Transverse colon (tissue), 4 donors: ENCODE measurements at regions of chr7 and their contacts with region 1.

Region 1: DNA sequence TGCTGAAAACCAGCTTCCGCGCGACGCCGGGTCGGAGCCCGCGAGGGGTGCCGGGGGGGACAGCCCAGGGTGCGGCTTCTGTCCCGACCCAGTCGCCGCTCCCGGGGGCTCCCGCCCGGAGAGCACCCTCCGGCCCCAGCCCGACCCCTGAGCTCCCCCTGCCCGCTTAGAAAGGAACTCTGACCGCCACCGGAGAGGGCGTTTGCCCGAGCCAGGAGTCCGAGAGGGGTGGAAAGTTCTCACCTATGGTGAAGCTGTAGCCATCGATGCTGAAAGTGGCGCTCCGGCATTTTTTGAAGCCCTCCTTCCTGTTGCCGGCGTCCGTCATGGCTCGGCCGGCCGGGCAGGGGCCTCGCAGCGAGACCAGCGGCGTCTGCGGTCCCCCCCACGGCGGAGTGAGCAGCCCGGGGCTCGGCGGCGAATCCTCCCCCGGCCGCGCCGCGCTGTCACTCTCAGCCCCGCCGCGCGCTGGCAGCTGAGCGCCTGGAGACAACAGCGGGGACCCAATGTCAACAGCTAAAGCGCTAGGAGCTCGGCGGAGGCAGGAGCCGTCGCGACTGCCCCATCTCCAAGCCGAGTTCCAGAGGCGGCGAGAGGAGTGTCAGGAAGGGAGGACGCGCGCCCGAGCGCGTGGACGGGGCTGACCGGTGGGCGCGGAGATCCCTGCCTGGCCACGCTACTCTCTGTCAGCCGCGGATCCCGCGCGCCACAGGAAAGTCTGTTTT is 191.6 kb downstream of the LSM5 start:
- DNase-seq: no peak
- H3K4me3 ChIP-seq: peak overlapping the region in 3 of 4 donors; percentile 25 to 45 (median 30)
- H3K27ac ChIP-seq: peak overlapping the region in 1 of 4 donors; percentile 17
- H3K4me1 ChIP-seq: peaks cover 0 to 10% (median 6%) of the 10 kb centered on the region in 4 donors
- H3K27me3 ChIP-seq: peaks cover 55% of the 10 kb centered on the region
- CTCF ChIP-seq: no peak
- EP300 ChIP-seq: no peak
- POLR2A ChIP-seq: no peak

Region 2: GRCh38 chr7:31705377-31705776 is 593.2 kb before region 1 on chr7:
- in situ Hi-C with region 1: no loop called
- intact Hi-C with region 1: no loop called
- DNase-seq: no peak
- H3K4me3 ChIP-seq: no peak overlapping the region
- H3K27ac ChIP-seq: no peak overlapping the region
- H3K4me1 ChIP-seq: no peaks in the 10 kb centered on the region
- H3K27me3 ChIP-seq: no peaks in the 10 kb centered on the region
- CTCF ChIP-seq: no peak
- EP300 ChIP-seq: no peak
- POLR2A ChIP-seq: no peak

Region 3: DNA sequence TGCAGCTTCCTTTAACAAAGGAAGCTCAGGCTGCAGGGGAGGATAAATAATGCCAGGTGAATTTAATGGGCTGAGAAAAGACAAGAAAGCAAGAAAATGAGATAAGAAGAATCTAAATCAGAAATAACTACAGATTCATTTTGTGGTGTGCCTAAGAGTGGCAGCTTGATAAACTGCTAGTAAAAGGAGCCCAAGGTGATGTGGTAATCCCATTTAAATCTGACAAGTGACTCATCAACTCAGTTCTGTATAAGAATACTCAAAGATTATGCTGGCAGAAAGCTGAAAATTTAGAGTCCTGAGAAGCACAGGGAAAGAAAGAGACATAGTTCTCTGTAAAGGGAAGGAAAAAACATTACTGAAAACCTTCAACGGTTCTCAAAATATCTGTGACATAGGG is 119.0 kb before region 1 on chr7:
- in situ Hi-C with region 1: loop called in 1 of 4 experiments (anchors 25 kb)
- intact Hi-C with region 1: no loop called
- DNase-seq: no peak
- H3K4me3 ChIP-seq: no peak overlapping the region
- H3K27ac ChIP-seq: no peak overlapping the region
- H3K4me1 ChIP-seq: no peaks in the 10 kb centered on the region
- H3K27me3 ChIP-seq: no peaks in the 10 kb centered on the region
- CTCF ChIP-seq: no peak
- EP300 ChIP-seq: no peak
- POLR2A ChIP-seq: no peak

Region 4: DNA sequence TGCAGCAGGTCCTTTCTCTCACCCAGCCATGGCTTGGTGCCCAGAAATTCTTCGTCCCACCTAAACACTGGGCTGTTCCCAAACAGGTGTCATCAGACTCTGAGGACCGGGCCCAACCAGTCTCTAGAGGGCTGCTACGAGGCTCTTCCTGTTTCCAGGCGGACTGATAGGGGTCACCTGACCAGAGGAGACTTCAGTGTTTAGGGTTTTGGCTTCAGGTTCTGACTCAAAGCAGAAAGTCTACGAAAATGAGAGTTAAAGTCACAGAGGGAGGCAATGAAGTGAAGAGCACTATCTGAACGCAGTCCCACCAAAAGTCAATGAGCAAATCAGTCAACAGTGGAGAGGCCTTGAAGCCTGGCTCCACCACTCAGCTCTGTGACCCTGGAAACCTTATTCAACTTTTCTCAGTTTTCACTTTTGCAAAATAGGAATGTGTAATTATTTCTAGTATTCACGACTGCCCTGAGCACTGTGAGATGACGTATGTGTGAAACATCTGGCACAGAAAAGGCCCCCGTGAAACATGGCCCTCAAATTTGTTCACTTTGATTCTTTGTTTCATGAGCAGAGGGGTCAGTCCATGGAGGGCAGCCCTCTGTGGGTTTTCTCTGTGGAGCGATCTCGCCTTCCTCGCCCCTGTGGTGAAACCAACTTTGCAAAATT is 38.5 kb before region 1 on chr7:
- in situ Hi-C with region 1: no loop called
- intact Hi-C with region 1: no loop called
- DNase-seq: no peak
- H3K4me3 ChIP-seq: no peak overlapping the region
- H3K27ac ChIP-seq: no peak overlapping the region
- H3K4me1 ChIP-seq: no peaks in the 10 kb centered on the region
- H3K27me3 ChIP-seq: no peaks in the 10 kb centered on the region
- CTCF ChIP-seq: no peak
- EP300 ChIP-seq: no peak
- POLR2A ChIP-seq: no peak